ENCODE measurements at regions of chr4 and their contacts with region 1.

Region 1: DNA sequence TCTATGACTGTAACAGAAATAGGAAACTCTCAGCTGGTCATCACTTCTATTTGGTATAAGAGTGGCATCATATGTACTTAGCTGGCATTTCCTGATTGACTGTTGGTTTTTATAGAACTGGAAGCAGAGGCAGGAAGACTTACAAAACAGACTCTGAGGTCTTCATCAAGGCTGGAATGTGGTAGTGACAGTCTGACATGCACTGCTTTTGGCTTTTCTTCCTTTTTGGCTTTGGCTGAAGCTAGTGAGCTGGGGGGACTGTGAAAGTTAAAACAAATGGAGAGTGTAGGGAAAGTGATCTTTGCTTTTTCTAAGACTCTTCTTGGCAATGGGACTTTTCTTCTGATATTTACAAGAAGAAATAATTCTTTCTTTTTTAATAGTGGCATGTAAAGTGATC is 121.1 kb upstream of the SLC4A4 start:
- DNase-seq: no peak
- ATAC-seq: peak in 1 of 4 donors; percentile 42
- H3K4me3 ChIP-seq: no peak overlapping the region
- H3K27ac ChIP-seq: no peak overlapping the region
- H3K4me1 ChIP-seq: peaks cover 5% of the 10 kb centered on the region
- H3K27me3 ChIP-seq: no peaks in the 10 kb centered on the region
- CTCF ChIP-seq: no peak

Region 2: GRCh38 chr4:71206763-71207162 is 10.9 kb before region 1 on chr4:
- intact Hi-C with region 1: loop called in 1 of 2 experiments (anchors 1 kb)
- DNase-seq: no peak
- ATAC-seq: no peak
- H3K4me3 ChIP-seq: no peak overlapping the region
- H3K27ac ChIP-seq: no peak overlapping the region
- H3K4me1 ChIP-seq: peaks cover 11% of the 10 kb centered on the region
- H3K27me3 ChIP-seq: no peaks in the 10 kb centered on the region
- CTCF ChIP-seq: no peak